ENCODE measurements at regions of chr7 and their contacts with region 1.

Region 1: GRCh38 chr7:50206453-50207250 is 97.9 kb upstream of the IKZF1 start:
- DNase-seq: peak; percentile 44 to 89 (median 78)
- ATAC-seq: peak; percentile 70
- H3K4me3 ChIP-seq: peak overlapping the region; percentile 20
- H3K4me3 Mint-ChIP-seq: peak overlapping the region; percentile 72
- H3K27ac ChIP-seq: peak overlapping the region; percentile 49 to 66
- H3K27ac Mint-ChIP-seq: peak overlapping the region; percentile 92
- H3K4me1 ChIP-seq: peaks cover 77% of the 10 kb centered on the region
- H3K4me1 Mint-ChIP-seq: peaks cover 76% of the 10 kb centered on the region
- H3K27me3 ChIP-seq: no peaks in the 10 kb centered on the region
- H3K27me3 Mint-ChIP-seq: no peaks in the 10 kb centered on the region
- CTCF ChIP-seq: no peak

Region 2: GRCh38 chr7:48537561-48537960 is 1669.1 kb before region 1 on chr7:
- CTCF ChIA-PET with region 1: no interaction called
- POLR2A ChIA-PET with region 1: no interaction called
- intact Hi-C with region 1: no loop called
- DNase-seq: no peak
- ATAC-seq: no peak
- H3K4me3 ChIP-seq: no peak overlapping the region
- H3K4me3 Mint-ChIP-seq: no peak overlapping the region
- H3K27ac ChIP-seq: no peak overlapping the region
- H3K27ac Mint-ChIP-seq: no peak overlapping the region
- H3K4me1 ChIP-seq: no peaks in the 10 kb centered on the region
- H3K4me1 Mint-ChIP-seq: no peaks in the 10 kb centered on the region
- H3K27me3 ChIP-seq: no peaks in the 10 kb centered on the region
- H3K27me3 Mint-ChIP-seq: no peaks in the 10 kb centered on the region
- CTCF ChIP-seq: no peak

Region 3: DNA sequence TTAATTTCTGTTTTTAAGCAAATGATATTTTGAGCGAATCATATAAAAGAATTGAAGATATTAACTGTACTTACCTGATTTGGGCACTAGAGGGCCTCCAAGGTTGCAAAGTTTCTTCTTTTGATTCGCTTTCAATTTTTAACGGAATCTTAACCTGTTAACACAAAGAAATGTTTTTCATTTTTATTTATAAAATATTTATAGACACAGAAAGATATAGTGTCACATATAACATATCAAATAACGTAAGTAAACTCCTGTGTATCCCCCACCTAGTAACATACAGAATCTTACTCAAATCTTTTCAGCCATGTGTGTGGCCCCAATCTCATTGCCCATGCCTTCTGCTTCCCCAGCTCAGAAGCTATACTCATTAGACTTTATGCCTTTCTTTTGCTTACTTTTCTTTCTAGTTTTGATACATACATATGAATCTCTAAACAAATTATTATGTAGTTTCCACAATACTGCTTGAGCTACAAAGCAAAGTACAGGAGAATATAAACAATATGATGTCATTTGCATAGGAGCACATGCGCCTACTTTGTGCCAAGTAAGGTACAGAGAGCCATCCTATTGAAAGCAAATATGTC is 64.1 kb before region 1 on chr7:
- CTCF ChIA-PET with region 1: interaction called, 16 read pairs
- POLR2A ChIA-PET with region 1: interaction called, 7 read pairs
- intact Hi-C with region 1: loop called (anchors 1 to 2 kb)
- DNase-seq: peak in 7 of 14 experiments; percentile 24 to 83 (median 66)
- ATAC-seq: peak; percentile 75
- H3K4me3 ChIP-seq: no peak overlapping the region
- H3K4me3 Mint-ChIP-seq: peak overlapping the region; percentile 44
- H3K27ac ChIP-seq: no peak overlapping the region
- H3K27ac Mint-ChIP-seq: peak overlapping the region; percentile 35
- H3K4me1 ChIP-seq: peaks cover 15% of the 10 kb centered on the region
- H3K4me1 Mint-ChIP-seq: peaks cover 33% of the 10 kb centered on the region
- H3K27me3 ChIP-seq: no peaks in the 10 kb centered on the region
- H3K27me3 Mint-ChIP-seq: no peaks in the 10 kb centered on the region
- CTCF ChIP-seq: peak; percentile 83

Region 4: DNA sequence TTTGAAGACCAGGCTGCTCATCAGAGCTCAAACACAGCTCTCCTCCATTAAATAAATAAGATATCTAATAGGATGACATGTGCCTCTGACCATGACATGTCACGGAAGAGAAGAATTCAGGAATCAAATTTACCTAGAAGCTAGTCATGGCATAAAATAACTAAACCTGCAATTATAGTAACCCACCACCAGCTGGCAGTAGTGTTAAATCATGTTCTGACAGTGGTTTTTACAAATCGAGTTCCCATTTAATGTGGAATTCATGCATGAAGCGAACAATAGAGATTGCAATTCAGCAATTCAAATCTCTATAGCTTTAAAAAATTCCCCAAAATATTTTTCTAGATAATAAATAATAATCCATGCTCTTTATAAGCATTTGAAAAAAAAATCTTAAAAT is 23.3 kb after region 1 on chr7:
- CTCF ChIA-PET with region 1: interaction called, 8 read pairs
- POLR2A ChIA-PET with region 1: interaction called, 27 read pairs
- intact Hi-C with region 1: loop called in 1 of 2 experiments (anchors 2 kb)
- DNase-seq: peak in 4 of 14 experiments; percentile 36 to 45 (median 44)
- ATAC-seq: no peak
- H3K4me3 ChIP-seq: no peak overlapping the region
- H3K4me3 Mint-ChIP-seq: no peak overlapping the region
- H3K27ac ChIP-seq: no peak overlapping the region
- H3K27ac Mint-ChIP-seq: no peak overlapping the region
- H3K4me1 ChIP-seq: peaks cover 20% of the 10 kb centered on the region
- H3K4me1 Mint-ChIP-seq: peaks cover 42% of the 10 kb centered on the region
- H3K27me3 ChIP-seq: no peaks in the 10 kb centered on the region
- H3K27me3 Mint-ChIP-seq: no peaks in the 10 kb centered on the region
- CTCF ChIP-seq: peak; percentile 50

Region 5: GRCh38 chr7:50298811-50299562 is 92.3 kb after region 1 on chr7:
- CTCF ChIA-PET with region 1: interaction called, 70 read pairs
- POLR2A ChIA-PET with region 1: interaction called, 271 read pairs
- intact Hi-C with region 1: loop called in 1 of 2 experiments (anchors 1 kb)
- DNase-seq: no peak
- ATAC-seq: no peak
- H3K4me3 ChIP-seq: no peak overlapping the region
- H3K4me3 Mint-ChIP-seq: no peak overlapping the region
- H3K27ac ChIP-seq: no peak overlapping the region
- H3K27ac Mint-ChIP-seq: peak overlapping the region; percentile 90
- H3K4me1 ChIP-seq: peaks cover 28% of the 10 kb centered on the region
- H3K4me1 Mint-ChIP-seq: peaks cover 66% of the 10 kb centered on the region
- H3K27me3 ChIP-seq: no peaks in the 10 kb centered on the region
- H3K27me3 Mint-ChIP-seq: no peaks in the 10 kb centered on the region
- CTCF ChIP-seq: no peak

Region 6: GRCh38 chr7:50335795-50336754 is 129.4 kb after region 1 on chr7:
- CTCF ChIA-PET with region 1: interaction called, 9 read pairs
- POLR2A ChIA-PET with region 1: interaction called, 20 read pairs
- intact Hi-C with region 1: no loop called
- DNase-seq: peak in 13 of 14 experiments; percentile 73 to 91 (median 85)
- ATAC-seq: peak; percentile 50
- H3K4me3 ChIP-seq: peak overlapping the region; percentile 24
- H3K4me3 Mint-ChIP-seq: no peak overlapping the region
- H3K27ac ChIP-seq: peak overlapping the region; percentile 87 to 91
- H3K27ac Mint-ChIP-seq: no peak overlapping the region
- H3K4me1 ChIP-seq: peaks cover 94% of the 10 kb centered on the region
- H3K4me1 Mint-ChIP-seq: peaks cover 14% of the 10 kb centered on the region
- H3K27me3 ChIP-seq: no peaks in the 10 kb centered on the region
- H3K27me3 Mint-ChIP-seq: no peaks in the 10 kb centered on the region
- CTCF ChIP-seq: no peak

Region 7: GRCh38 chr7:50369143-50370026 is 162.7 kb after region 1 on chr7:
- CTCF ChIA-PET with region 1: interaction called, 87 read pairs
- POLR2A ChIA-PET with region 1: interaction called, 137 read pairs
- intact Hi-C with region 1: loop called (anchors 1 kb)
- DNase-seq: peak in 7 of 14 experiments; percentile 45 to 91 (median 65)
- ATAC-seq: peak; percentile 58
- H3K4me3 ChIP-seq: no peak overlapping the region
- H3K4me3 Mint-ChIP-seq: peak overlapping the region; percentile 71
- H3K27ac ChIP-seq: peak overlapping the region; percentile 68 to 73
- H3K27ac Mint-ChIP-seq: no peak overlapping the region
- H3K4me1 ChIP-seq: peaks cover 80% of the 10 kb centered on the region
- H3K4me1 Mint-ChIP-seq: peaks cover 97% of the 10 kb centered on the region
- H3K27me3 ChIP-seq: no peaks in the 10 kb centered on the region
- H3K27me3 Mint-ChIP-seq: no peaks in the 10 kb centered on the region
- CTCF ChIP-seq: peak; percentile 88

Region 8: DNA sequence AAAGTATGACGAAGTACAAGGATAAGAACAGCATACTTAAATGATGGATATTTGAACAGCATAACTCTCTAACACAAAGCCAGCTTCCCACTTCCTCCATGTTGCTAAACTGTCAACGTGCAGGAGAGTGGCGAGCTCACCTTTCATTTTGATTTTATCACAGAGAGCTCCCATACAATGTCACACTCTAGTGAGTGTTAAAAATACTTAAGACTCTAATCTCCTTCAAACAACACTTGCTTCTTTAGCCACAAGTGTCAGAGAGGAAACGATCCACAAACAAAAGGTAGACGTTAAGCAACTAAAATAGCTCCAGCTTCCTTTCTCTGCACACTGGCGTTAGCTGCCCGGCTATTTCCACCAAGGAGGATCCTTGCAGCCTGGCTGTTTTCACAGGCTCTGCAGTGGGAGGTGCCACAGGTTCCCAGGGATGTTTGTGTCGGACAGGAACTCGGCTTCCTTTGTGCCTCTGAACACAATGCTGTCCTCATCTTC is 915.3 kb after region 1 on chr7:
- CTCF ChIA-PET with region 1: no interaction called
- POLR2A ChIA-PET with region 1: no interaction called
- intact Hi-C with region 1: no loop called
- DNase-seq: peak in 2 of 14 experiments; percentile 10 to 11
- ATAC-seq: peak; percentile 61
- H3K4me3 ChIP-seq: peak overlapping the region; percentile 23
- H3K4me3 Mint-ChIP-seq: peak overlapping the region; percentile 26
- H3K27ac ChIP-seq: no peak overlapping the region
- H3K27ac Mint-ChIP-seq: peak overlapping the region; percentile 60
- H3K4me1 ChIP-seq: peaks cover 8% of the 10 kb centered on the region
- H3K4me1 Mint-ChIP-seq: peaks cover 34% of the 10 kb centered on the region
- H3K27me3 ChIP-seq: no peaks in the 10 kb centered on the region
- H3K27me3 Mint-ChIP-seq: no peaks in the 10 kb centered on the region
- CTCF ChIP-seq: no peak